CD8-positive, alpha-beta T cell (primary cell): ENCODE measurements at regions of chr16 and their contacts with region 1.

Region 1: GRCh38 chr16:71723537-71724319 is 773 bp downstream of the PHLPP2 start:
- DNase-seq: peak; percentile 61 to 90 (median 79)
- ATAC-seq: peak; percentile 82
- H3K4me3 ChIP-seq: peak overlapping the region; percentile 48 to 73
- H3K4me3 Mint-ChIP-seq: peak overlapping the region; percentile 79
- H3K27ac ChIP-seq: peak overlapping the region in 1 of 2 experiments; percentile 69
- H3K27ac Mint-ChIP-seq: peak overlapping the region; percentile 67
- H3K4me1 ChIP-seq: peaks cover 14% of the 10 kb centered on the region
- H3K4me1 Mint-ChIP-seq: peaks cover 15% of the 10 kb centered on the region
- H3K27me3 ChIP-seq: no peaks in the 10 kb centered on the region
- H3K27me3 Mint-ChIP-seq: no peaks in the 10 kb centered on the region
- CTCF ChIP-seq: no peak

Region 2: GRCh38 chr16:70438969-70439862 is 1284.5 kb before region 1 on chr16 and contains the start of gene ST3GAL2:
- CTCF ChIA-PET with region 1: no interaction called
- POLR2A ChIA-PET with region 1: no interaction called
- intact Hi-C with region 1: loop called in 1 of 2 experiments (anchors 10 kb)
- DNase-seq: peak; percentile 87 to 97 (median 94)
- ATAC-seq: peak; percentile 97
- H3K4me3 ChIP-seq: peak within 1 kb of the TSS; percentile 75 to 91
- H3K4me3 Mint-ChIP-seq: peak within 1 kb of the TSS; percentile 94
- H3K27ac ChIP-seq: peak within 1 kb of the TSS; percentile 48 to 65
- H3K27ac Mint-ChIP-seq: peak within 1 kb of the TSS; percentile 89
- H3K4me1 ChIP-seq: peaks cover 36% of the 10 kb centered on the region
- H3K4me1 Mint-ChIP-seq: peaks cover 39% of the 10 kb centered on the region
- H3K27me3 ChIP-seq: no peaks in the 10 kb centered on the region
- H3K27me3 Mint-ChIP-seq: no peaks in the 10 kb centered on the region
- CTCF ChIP-seq: no peak
- total RNA-seq, gene ST3GAL2: 5.6 to 6.1 TPM

Region 3: DNA sequence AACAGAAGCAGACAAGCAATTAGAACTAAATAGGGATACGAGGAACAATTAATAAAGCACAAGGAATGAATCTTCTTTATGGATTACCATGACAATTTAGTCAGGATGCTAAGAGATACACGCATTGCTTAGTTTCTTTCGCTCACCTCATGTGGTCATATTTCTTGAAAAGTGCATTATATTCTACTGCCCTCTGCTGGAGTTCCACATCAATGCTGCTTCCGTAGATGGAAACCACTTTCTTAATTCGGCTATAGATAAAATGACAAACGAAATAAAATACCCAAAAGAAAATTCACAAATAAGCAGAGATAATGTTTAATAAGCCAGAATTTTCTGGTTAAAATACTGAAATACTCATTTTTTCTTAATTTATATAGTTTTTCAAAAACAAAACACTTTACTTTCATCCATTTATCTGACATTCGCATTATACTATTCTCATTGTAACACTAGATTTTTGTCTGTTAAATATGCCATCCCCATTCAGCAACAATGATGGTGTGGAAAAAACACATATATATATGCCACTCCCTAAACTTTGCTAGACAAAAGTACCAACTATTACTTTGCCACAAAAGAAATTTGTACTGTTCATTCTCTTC is 22.8 kb after region 1 on chr16:
- CTCF ChIA-PET with region 1: interaction called, 3 read pairs
- POLR2A ChIA-PET with region 1: no interaction called
- intact Hi-C with region 1: loop called (anchors 2 kb)
- DNase-seq: peak in 4 of 9 experiments; percentile 9 to 70 (median 40)
- ATAC-seq: peak; percentile 65
- H3K4me3 ChIP-seq: no peak overlapping the region
- H3K4me3 Mint-ChIP-seq: no peak overlapping the region
- H3K27ac ChIP-seq: no peak overlapping the region
- H3K27ac Mint-ChIP-seq: no peak overlapping the region
- H3K4me1 ChIP-seq: no peaks in the 10 kb centered on the region
- H3K4me1 Mint-ChIP-seq: peaks cover 3% of the 10 kb centered on the region
- H3K27me3 ChIP-seq: no peaks in the 10 kb centered on the region
- H3K27me3 Mint-ChIP-seq: no peaks in the 10 kb centered on the region
- CTCF ChIP-seq: peak; percentile 75

Region 4: GRCh38 chr16:71808593-71809459 is 85.1 kb after region 1 on chr16 and contains the start of gene AP1G1:
- CTCF ChIA-PET with region 1: no interaction called
- POLR2A ChIA-PET with region 1: no interaction called
- intact Hi-C with region 1: loop called (anchors 2 kb)
- DNase-seq: peak; percentile 87 to 99 (median 93)
- ATAC-seq: peak; percentile 89
- H3K4me3 ChIP-seq: peak within 1 kb of the TSS; percentile 95
- H3K4me3 Mint-ChIP-seq: peak within 1 kb of the TSS; percentile 95
- H3K27ac ChIP-seq: peak within 1 kb of the TSS; percentile 98
- H3K27ac Mint-ChIP-seq: peak within 1 kb of the TSS; percentile 99
- H3K4me1 ChIP-seq: peaks cover 26% of the 10 kb centered on the region
- H3K4me1 Mint-ChIP-seq: peaks cover 40% of the 10 kb centered on the region
- H3K27me3 ChIP-seq: no peaks in the 10 kb centered on the region
- H3K27me3 Mint-ChIP-seq: no peaks in the 10 kb centered on the region
- CTCF ChIP-seq: no peak
- total RNA-seq, gene AP1G1: 179 to 202 TPM

Region 5: DNA sequence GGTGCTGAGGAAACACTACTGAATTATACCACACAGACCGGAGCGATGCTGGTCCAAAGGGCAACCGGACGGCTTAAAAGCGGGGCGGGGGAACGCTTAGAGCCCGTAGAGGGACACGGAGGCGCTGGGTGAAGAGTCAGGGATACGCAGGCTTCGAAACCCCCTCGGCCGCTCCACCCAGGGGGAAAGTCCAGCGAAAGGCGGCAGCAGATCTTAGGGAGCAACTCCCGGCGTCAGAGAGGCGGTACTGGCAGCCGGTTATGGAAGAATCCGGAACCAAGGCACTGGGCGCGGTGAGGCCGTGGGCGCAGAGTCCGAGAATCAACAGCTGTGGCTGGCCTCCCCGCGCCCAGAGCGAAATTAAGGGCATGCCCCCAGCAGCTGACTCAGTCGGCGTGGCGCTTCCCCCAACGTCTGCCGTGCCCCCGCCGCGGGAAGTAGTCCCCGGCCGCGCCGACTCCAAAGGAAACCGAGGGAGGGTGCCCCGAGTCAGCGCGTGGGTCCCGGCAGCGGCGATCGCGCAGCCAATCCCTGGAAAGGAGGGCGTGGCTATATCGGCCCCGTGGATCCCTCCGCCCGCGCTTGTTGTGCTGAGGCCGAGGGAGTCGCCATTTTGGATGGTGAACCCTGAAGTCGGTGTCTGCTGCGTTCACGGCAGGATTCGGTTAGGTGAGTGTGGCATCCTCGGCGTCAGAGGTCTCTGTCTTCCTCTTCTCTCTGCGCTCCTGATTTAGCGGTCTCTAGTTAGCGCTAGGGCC is 171.4 kb after region 1 on chr16 and contains the start of gene IST1:
- CTCF ChIA-PET with region 1: no interaction called
- POLR2A ChIA-PET with region 1: no interaction called
- intact Hi-C with region 1: loop called (anchors 1 to 2 kb)
- DNase-seq: peak; percentile 95 to 99 (median 98)
- ATAC-seq: peak; percentile 94
- H3K4me3 ChIP-seq: peak within 1 kb of the TSS; percentile 98 to 99
- H3K4me3 Mint-ChIP-seq: peak within 1 kb of the TSS; percentile 97
- H3K27ac ChIP-seq: peak within 1 kb of the TSS; percentile 97
- H3K27ac Mint-ChIP-seq: peak within 1 kb of the TSS; percentile 97
- H3K4me1 ChIP-seq: peaks cover 34% of the 10 kb centered on the region
- H3K4me1 Mint-ChIP-seq: peaks cover 32% of the 10 kb centered on the region
- H3K27me3 ChIP-seq: no peaks in the 10 kb centered on the region
- H3K27me3 Mint-ChIP-seq: no peaks in the 10 kb centered on the region
- CTCF ChIP-seq: no peak
- total RNA-seq, gene IST1: 460 to 476 TPM

Region 6: DNA sequence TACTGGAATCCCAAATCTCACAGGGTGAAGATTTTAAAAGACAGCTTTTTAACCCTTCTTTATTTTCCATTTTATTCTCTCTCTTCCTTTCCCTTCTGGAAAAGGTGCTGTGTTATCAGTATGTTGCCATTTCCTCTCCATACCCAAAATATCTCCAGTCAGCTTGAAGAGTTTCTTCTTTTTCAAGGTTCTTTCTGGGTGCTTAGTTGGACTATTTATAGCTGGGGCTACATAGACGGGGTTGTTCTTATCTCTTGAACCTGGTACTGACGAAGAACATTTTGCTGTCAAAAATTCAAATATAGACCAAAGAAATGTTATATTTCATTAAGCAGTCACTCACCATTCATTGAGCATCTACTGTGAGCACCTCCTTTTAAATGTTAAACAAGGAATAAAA is 220.2 kb after region 1 on chr16:
- CTCF ChIA-PET with region 1: no interaction called
- POLR2A ChIA-PET with region 1: no interaction called
- intact Hi-C with region 1: no loop called
- DNase-seq: no peak
- ATAC-seq: no peak
- H3K4me3 ChIP-seq: no peak overlapping the region
- H3K4me3 Mint-ChIP-seq: no peak overlapping the region
- H3K27ac ChIP-seq: no peak overlapping the region
- H3K27ac Mint-ChIP-seq: no peak overlapping the region
- H3K4me1 ChIP-seq: no peaks in the 10 kb centered on the region
- H3K4me1 Mint-ChIP-seq: no peaks in the 10 kb centered on the region
- H3K27me3 ChIP-seq: no peaks in the 10 kb centered on the region
- H3K27me3 Mint-ChIP-seq: peaks cover 11% of the 10 kb centered on the region
- CTCF ChIP-seq: no peak

Region 7: GRCh38 chr16:72787514-72788268 is 1064.0 kb after region 1 on chr16:
- CTCF ChIA-PET with region 1: no interaction called
- POLR2A ChIA-PET with region 1: no interaction called
- intact Hi-C with region 1: loop called in 1 of 2 experiments (anchors 5 kb)
- DNase-seq: peak; percentile 31 to 83 (median 65)
- ATAC-seq: peak; percentile 89
- H3K4me3 ChIP-seq: peak overlapping the region; percentile 53 to 79
- H3K4me3 Mint-ChIP-seq: peak overlapping the region; percentile 91
- H3K27ac ChIP-seq: no peak overlapping the region
- H3K27ac Mint-ChIP-seq: peak overlapping the region; percentile 92
- H3K4me1 ChIP-seq: peaks cover 9% of the 10 kb centered on the region
- H3K4me1 Mint-ChIP-seq: peaks cover 20% of the 10 kb centered on the region
- H3K27me3 ChIP-seq: no peaks in the 10 kb centered on the region
- H3K27me3 Mint-ChIP-seq: peaks cover 10% of the 10 kb centered on the region
- CTCF ChIP-seq: no peak